Left colon (tissue), 2 donors: ENCODE measurements at regions of chr5 and their contacts with region 1.

Region 1: GRCh38 chr5:173972925-173973615 is 15.9 kb upstream of the C5orf47 start:
- DNase-seq: peak; percentile 72 to 88
- ATAC-seq: peak; percentile 93

Region 2: GRCh38 chr5:173618927-173619519 is 354.0 kb before region 1 on chr5:
- intact Hi-C with region 1: loop called in 1 of 2 experiments (anchors 2 kb)
- DNase-seq: peak in 1 of 2 donors; percentile 43
- ATAC-seq: no peak

Region 3: DNA sequence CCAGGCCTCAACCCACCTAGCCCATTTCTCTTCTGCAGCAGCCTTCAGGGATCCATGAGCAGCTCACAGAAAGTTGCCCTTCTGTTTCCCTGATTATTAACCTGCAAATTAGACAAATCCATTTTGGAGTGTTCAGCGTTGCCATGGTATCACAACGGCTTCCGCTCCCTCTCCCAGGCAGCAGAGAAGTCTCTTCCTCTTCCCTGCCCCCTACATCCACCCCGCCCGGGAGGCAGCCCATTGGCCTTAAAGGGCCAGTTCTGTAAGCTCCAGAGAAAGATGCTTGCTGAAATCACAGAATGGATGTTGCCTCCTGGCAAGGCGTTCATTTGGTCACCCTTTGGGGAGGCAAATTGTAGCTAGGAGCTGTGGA is 308.9 kb before region 1 on chr5:
- intact Hi-C with region 1: no loop called
- DNase-seq: peak in 1 of 2 donors; percentile 25
- ATAC-seq: peak; percentile 31